CD4-positive, alpha-beta memory T cell (primary cell): ENCODE measurements at regions of chr2 and their contacts with region 1.

Region 1: GRCh38 chr2:158903711-158904443 is 64.6 kb upstream of the TANC1 start:
- DNase-seq: no peak
- H3K4me3 ChIP-seq: no peak overlapping the region
- H3K4me3 Mint-ChIP-seq: no peak overlapping the region
- H3K27ac ChIP-seq: no peak overlapping the region
- H3K27ac Mint-ChIP-seq: no peak overlapping the region
- H3K4me1 ChIP-seq: no peaks in the 10 kb centered on the region
- H3K4me1 Mint-ChIP-seq: peaks cover 0 to 2% (median 0%) of the 10 kb centered on the region in 4 donors
- H3K27me3 ChIP-seq: no peaks in the 10 kb centered on the region
- H3K27me3 Mint-ChIP-seq: peaks cover 2 to 4% of the 10 kb centered on the region in 2 donors

Region 2: DNA sequence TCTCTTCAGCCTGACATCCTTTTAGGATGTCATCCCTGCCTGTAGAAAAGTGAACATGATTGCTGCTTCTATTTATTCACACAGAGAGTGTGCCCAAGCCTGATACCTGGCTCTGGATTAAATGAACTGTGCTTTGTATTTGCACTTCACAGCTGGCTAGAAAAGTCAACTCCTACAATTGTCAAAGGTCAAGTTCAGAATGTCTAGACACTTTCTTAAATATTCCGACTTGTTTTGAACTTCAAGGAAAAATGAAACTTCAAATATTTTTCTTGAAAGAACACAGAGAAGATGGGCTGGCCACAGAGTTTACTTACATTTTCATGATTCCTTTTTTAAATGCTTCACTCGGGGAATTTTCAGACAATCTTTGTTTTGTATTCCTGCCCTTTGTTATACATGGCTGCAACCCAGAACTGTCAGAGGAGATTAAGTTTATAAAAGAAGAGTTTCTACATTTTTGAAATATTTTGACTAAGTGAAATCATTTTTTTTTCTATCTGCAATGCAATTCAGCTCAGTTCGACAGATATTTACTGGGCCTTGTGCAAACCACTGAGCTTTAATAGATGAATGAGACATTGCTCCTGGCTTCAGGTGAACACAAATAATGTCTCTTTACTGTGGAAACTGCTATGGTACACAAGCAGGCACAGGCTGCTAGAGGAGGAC is 75.2 kb before region 1 on chr2:
- CTCF ChIA-PET with region 1: no interaction called
- POLR2A ChIA-PET with region 1: no interaction called
- intact Hi-C with region 1: no loop called
- DNase-seq: no peak
- H3K4me3 ChIP-seq: no peak overlapping the region
- H3K4me3 Mint-ChIP-seq: no peak overlapping the region
- H3K27ac ChIP-seq: no peak overlapping the region
- H3K27ac Mint-ChIP-seq: no peak overlapping the region
- H3K4me1 ChIP-seq: no peaks in the 10 kb centered on the region
- H3K4me1 Mint-ChIP-seq: no peaks in the 10 kb centered on the region
- H3K27me3 ChIP-seq: no peaks in the 10 kb centered on the region
- H3K27me3 Mint-ChIP-seq: peaks cover 3 to 5% of the 10 kb centered on the region in 2 donors

Region 3: GRCh38 chr2:158990397-158991209 is 86.7 kb after region 1 on chr2:
- CTCF ChIA-PET with region 1: no interaction called
- POLR2A ChIA-PET with region 1: no interaction called
- intact Hi-C with region 1: no loop called
- DNase-seq: no peak
- H3K4me3 ChIP-seq: no peak overlapping the region
- H3K4me3 Mint-ChIP-seq: no peak overlapping the region
- H3K27ac ChIP-seq: no peak overlapping the region
- H3K27ac Mint-ChIP-seq: no peak overlapping the region
- H3K4me1 ChIP-seq: no peaks in the 10 kb centered on the region
- H3K4me1 Mint-ChIP-seq: no peaks in the 10 kb centered on the region
- H3K27me3 ChIP-seq: no peaks in the 10 kb centered on the region
- H3K27me3 Mint-ChIP-seq: peaks cover 6 to 9% of the 10 kb centered on the region in 2 donors

Region 4: GRCh38 chr2:159921752-159922404 is 1018.0 kb after region 1 on chr2:
- CTCF ChIA-PET with region 1: no interaction called
- POLR2A ChIA-PET with region 1: no interaction called
- intact Hi-C with region 1: loop called (anchors 2 kb)
- DNase-seq: peak; percentile 51 to 58 (median 57)
- H3K4me3 ChIP-seq: no peak overlapping the region
- H3K4me3 Mint-ChIP-seq: no peak overlapping the region
- H3K27ac ChIP-seq: no peak overlapping the region
- H3K27ac Mint-ChIP-seq: no peak overlapping the region
- H3K4me1 ChIP-seq: no peaks in the 10 kb centered on the region
- H3K4me1 Mint-ChIP-seq: peaks cover 0 to 5% (median 3%) of the 10 kb centered on the region in 4 donors
- H3K27me3 ChIP-seq: no peaks in the 10 kb centered on the region
- H3K27me3 Mint-ChIP-seq: peaks cover 16 to 23% of the 10 kb centered on the region in 2 donors

Region 5: GRCh38 chr2:159968279-159968900 is 1064.5 kb after region 1 on chr2:
- CTCF ChIA-PET with region 1: interaction called, 4 read pairs
- POLR2A ChIA-PET with region 1: no interaction called
- intact Hi-C with region 1: loop called (anchors 5 kb)
- DNase-seq: peak in 3 of 5 donors; percentile 1 to 5 (median 3)
- H3K4me3 ChIP-seq: no peak overlapping the region
- H3K4me3 Mint-ChIP-seq: no peak overlapping the region
- H3K27ac ChIP-seq: no peak overlapping the region
- H3K27ac Mint-ChIP-seq: no peak overlapping the region
- H3K4me1 ChIP-seq: no peaks in the 10 kb centered on the region
- H3K4me1 Mint-ChIP-seq: no peaks in the 10 kb centered on the region
- H3K27me3 ChIP-seq: no peaks in the 10 kb centered on the region
- H3K27me3 Mint-ChIP-seq: no peaks in the 10 kb centered on the region

Region 6: GRCh38 chr2:160210599-160211138 is 1306.8 kb after region 1 on chr2:
- CTCF ChIA-PET with region 1: no interaction called
- POLR2A ChIA-PET with region 1: no interaction called
- intact Hi-C with region 1: loop called (anchors 2 kb)
- DNase-seq: peak; percentile 41 to 61 (median 55)
- H3K4me3 ChIP-seq: no peak overlapping the region
- H3K4me3 Mint-ChIP-seq: no peak overlapping the region
- H3K27ac ChIP-seq: no peak overlapping the region
- H3K27ac Mint-ChIP-seq: peak overlapping the region in 1 of 7 donors; percentile 71
- H3K4me1 ChIP-seq: no peaks in the 10 kb centered on the region
- H3K4me1 Mint-ChIP-seq: peaks cover 7 to 15% (median 13%) of the 10 kb centered on the region in 4 donors
- H3K27me3 ChIP-seq: no peaks in the 10 kb centered on the region
- H3K27me3 Mint-ChIP-seq: peaks cover 4 to 10% of the 10 kb centered on the region in 2 donors